Panc1 (cell line): ENCODE measurements at regions of chr14 and their contacts with region 1.

Region 1: GRCh38 chr14:99672506-99673304 is 11.4 kb upstream of the CYP46A1 start:
- DNase-seq: no peak
- ATAC-seq: no peak; the same call in 1 of the 2 replicates
- H3K4me3 ChIP-seq: no peak overlapping the region
- H3K27ac ChIP-seq: no peak overlapping the region
- H3K4me1 ChIP-seq: no peaks in the 10 kb centered on the region
- H3K27me3 ChIP-seq: no peaks in the 10 kb centered on the region
- CTCF ChIP-seq: no peak

Region 2: GRCh38 chr14:99930420-99931274 is 257.9 kb after region 1 on chr14:
- CTCF ChIA-PET with region 1: interaction called, 11 read pairs
- POLR2A ChIA-PET with region 1: no interaction called
- in situ Hi-C with region 1: no loop called
- intact Hi-C with region 1: no loop called
- DNase-seq: no peak
- ATAC-seq: no peak
- H3K4me3 ChIP-seq: no peak overlapping the region
- H3K27ac ChIP-seq: no peak overlapping the region
- H3K4me1 ChIP-seq: no peaks in the 10 kb centered on the region
- H3K27me3 ChIP-seq: no peaks in the 10 kb centered on the region
- CTCF ChIP-seq: no peak